ENCODE measurements at regions of chr9 and their contacts with region 1.

Region 1: DNA sequence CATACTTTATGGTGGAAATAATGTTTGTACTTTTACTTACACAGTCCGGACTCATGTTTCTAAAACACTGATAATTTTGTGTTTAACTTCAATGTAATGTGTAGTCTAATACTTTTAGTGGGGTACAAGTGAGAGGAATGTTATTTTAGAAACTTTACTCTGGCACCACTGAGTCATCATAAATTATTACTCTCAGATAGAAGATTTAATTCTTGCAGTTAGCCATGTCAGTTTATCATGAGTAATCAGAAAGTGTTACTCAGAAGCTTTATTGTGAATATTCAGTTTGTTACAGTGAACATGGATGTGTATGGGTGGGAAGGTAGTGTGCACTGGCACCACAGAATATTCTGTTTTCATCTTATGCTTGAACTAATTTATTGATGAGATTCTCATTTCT is 20.0 kb downstream of the OGN start:
- DNase-seq: no peak
- ATAC-seq: peak; percentile 30
- H3K4me3 ChIP-seq: no peak overlapping the region
- H3K27ac ChIP-seq: no peak overlapping the region
- H3K4me1 ChIP-seq: peaks cover 2 to 3% of the 10 kb centered on the region in 2 donors
- H3K27me3 ChIP-seq: no peaks in the 10 kb centered on the region

Region 2: GRCh38 chr9:92349771-92350739 is 34.3 kb before region 1 on chr9:
- intact Hi-C with region 1: loop called (anchors 5 kb)
- DNase-seq: no peak
- ATAC-seq: peak; percentile 82
- H3K4me3 ChIP-seq: peak overlapping the region in 1 of 2 donors; percentile 34
- H3K27ac ChIP-seq: peak overlapping the region in 1 of 2 donors; percentile 51
- H3K4me1 ChIP-seq: peaks cover 0 to 2% of the 10 kb centered on the region in 2 donors
- H3K27me3 ChIP-seq: no peaks in the 10 kb centered on the region

Measured in aorta (tissue), 5 donors.